ENCODE measurements at regions of chr2 and their contacts with region 1.

Region 1: GRCh38 chr2:185921048-185921756 is 182.6 kb downstream of the FSIP2 start:
- DNase-seq: no peak
- H3K4me3 Mint-ChIP-seq: no peak overlapping the region
- H3K27ac Mint-ChIP-seq: no peak overlapping the region
- H3K4me1 Mint-ChIP-seq: no peaks in the 10 kb centered on the region
- H3K27me3 Mint-ChIP-seq: no peaks in the 10 kb centered on the region

Region 2: DNA sequence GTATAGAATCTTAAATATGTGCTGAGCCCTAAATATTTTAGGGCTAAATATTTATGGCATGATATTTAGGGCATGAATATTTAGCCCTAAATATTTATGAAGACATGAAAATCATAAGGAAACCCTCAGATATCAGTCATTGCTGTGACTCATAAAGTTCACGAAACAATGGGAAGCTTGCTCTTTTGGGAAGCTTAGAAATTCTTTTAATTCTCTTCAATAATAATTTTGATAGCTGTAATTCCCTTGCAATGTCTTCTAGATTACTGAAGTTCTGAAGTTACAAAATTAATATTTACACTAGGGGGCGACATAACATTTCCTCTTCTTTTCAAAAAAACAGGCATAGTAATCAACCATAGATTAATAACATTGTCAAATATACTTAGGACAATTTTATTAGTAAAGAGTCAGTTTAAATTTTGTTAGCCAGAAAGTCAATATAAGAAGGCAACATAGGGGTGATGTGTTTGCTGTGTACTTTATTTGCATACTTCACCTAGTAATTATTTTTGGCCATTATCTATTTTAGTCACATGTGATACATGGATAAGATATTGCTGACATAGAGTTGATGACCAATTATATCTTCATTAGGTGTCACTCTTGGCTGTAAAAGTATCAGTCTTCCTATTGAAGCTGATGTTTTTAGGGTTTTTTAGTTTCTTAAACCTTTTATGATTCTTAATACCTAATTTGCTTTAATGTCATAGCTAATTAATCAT is 1309.7 kb before region 1 on chr2:
- intact Hi-C with region 1: loop called (anchors 5 kb)
- DNase-seq: no peak
- H3K4me3 Mint-ChIP-seq: no peak overlapping the region
- H3K27ac Mint-ChIP-seq: no peak overlapping the region
- H3K4me1 Mint-ChIP-seq: no peaks in the 10 kb centered on the region
- H3K27me3 Mint-ChIP-seq: no peaks in the 10 kb centered on the region